Vagina (tissue), 2 donors: ENCODE measurements at regions of chr1 and their contacts with region 1.

Region 1: DNA sequence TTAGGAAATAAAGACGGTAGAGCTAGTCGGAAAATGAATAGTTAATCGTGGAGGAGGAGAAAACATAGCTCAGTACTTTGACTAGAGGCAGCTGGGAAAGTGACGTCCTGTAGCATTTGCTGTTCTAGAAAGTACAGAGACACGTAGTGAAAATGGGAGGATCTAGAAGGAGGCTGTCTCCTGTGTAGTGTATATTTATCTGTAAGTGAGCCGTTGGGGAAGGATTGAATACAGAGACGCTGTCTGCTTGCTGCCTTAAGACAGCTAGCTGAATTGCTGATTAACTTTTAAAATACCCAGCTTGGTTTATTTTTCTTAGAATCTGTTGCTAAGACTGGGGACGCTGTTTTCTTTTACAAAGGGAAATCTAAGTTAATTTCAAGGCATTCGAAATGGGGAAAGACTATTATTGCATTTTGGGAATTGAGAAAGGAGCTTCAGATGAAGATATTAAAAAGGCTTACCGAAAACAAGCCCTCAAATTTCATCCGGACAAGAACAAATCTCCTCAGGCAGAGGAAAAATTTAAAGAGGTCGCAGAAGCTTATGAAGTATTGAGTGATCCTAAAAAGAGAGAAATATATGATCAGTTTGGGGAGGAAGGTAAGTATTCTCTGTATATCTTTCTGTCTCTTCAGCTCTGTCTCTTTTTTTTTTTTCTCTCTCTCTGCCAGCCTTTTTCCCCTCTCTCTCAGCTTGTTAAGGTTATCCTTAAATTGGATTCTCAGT is at the start of gene DNAJB4:
- DNase-seq: no peak
- H3K4me3 ChIP-seq: peak within 1 kb of the TSS; percentile 57 to 64
- H3K27ac ChIP-seq: peak within 1 kb of the TSS; percentile 97
- H3K4me1 ChIP-seq: peaks cover 34% of the 10 kb centered on the region
- H3K27me3 ChIP-seq: no peaks in the 10 kb centered on the region
- CTCF ChIP-seq: no peak
- POLR2A ChIP-seq: peak; percentile 98
- total RNA-seq, gene DNAJB4: 20.9 TPM

Region 2: GRCh38 chr1:77925518-77925917 is 79.4 kb before region 1 on chr1:
- intact Hi-C with region 1: no loop called
- DNase-seq: no peak
- H3K4me3 ChIP-seq: no peak overlapping the region
- H3K27ac ChIP-seq: no peak overlapping the region
- H3K4me1 ChIP-seq: no peaks in the 10 kb centered on the region
- H3K27me3 ChIP-seq: no peaks in the 10 kb centered on the region
- CTCF ChIP-seq: no peak
- POLR2A ChIP-seq: no peak

Region 3: GRCh38 chr1:77978969-77979876 is 25.7 kb before region 1 on chr1 and contains the start of gene FUBP1:
- intact Hi-C with region 1: loop called (anchors 2 kb)
- DNase-seq: peak in 1 of 2 donors; percentile 98
- H3K4me3 ChIP-seq: peak within 1 kb of the TSS; percentile 67 to 73
- H3K27ac ChIP-seq: peak within 1 kb of the TSS; percentile 92
- H3K4me1 ChIP-seq: peaks cover 44% of the 10 kb centered on the region
- H3K27me3 ChIP-seq: no peaks in the 10 kb centered on the region
- CTCF ChIP-seq: peak; percentile 40 to 77 (median 74)
- POLR2A ChIP-seq: peak in 1 of 2 donors; percentile 51
- total RNA-seq, gene FUBP1: 85.7 TPM

Region 4: DNA sequence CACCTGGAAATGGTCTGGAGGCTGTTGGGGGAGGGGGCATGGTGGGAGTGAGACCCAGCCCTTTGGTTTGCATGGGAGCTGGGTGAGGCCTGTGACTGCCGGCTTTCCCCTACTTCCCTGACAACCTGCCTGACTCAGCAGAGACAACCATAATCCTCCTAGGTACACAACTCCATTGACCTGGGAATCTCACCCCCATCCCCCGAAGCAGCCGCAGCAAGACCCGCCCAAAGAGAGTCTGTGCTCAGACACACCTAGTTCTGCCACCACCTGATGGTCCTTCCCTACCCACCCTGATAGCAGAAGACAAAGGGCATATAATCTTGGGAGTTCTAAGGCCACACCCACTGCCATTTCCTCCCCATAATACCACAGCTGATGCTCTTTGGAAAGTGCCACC is 209.5 kb after region 1 on chr1:
- intact Hi-C with region 1: no loop called
- DNase-seq: no peak
- H3K4me3 ChIP-seq: no peak overlapping the region
- H3K27ac ChIP-seq: no peak overlapping the region
- H3K4me1 ChIP-seq: no peaks in the 10 kb centered on the region
- H3K27me3 ChIP-seq: no peaks in the 10 kb centered on the region
- CTCF ChIP-seq: no peak
- POLR2A ChIP-seq: no peak